CD8-positive, alpha-beta T cell (primary cell): ENCODE measurements at regions of chr3 and their contacts with region 1.

Region 1: DNA sequence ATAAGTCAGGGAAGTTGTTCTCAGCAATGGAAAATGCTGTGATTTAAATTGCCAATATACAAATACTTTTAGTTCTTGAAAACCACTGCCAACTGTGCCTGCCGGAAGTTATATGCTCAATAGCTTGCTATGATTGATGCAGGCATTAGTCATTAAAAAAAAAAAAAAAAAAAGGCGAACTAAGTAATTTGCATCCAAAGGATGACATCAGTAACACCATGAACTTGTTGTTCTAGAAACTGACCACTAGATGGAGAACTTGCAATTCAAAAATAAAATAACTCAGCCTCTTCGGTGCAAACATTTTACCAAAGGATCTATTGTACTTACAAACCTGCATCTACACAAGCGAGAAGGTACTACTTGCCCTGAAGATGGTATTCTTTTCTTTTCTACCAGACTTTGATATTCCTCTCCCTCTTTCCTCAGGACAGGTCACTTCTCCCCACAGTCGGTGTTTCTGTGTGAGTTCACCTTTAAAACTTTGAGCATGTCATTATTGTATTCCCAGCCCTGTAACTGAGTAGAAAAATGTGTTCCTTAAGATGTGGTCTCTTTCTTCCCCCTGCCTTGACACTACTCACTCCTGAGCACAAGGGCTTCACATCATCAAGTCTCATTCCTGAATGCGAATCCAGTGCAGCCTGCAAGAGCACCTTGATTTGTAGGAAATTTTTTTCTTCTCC is 115.0 kb upstream of the VEPH1 start:
- DNase-seq: peak in 3 of 9 experiments; percentile 23 to 57 (median 48)
- ATAC-seq: peak; percentile 73
- H3K4me3 ChIP-seq: no peak overlapping the region
- H3K4me3 Mint-ChIP-seq: no peak overlapping the region
- H3K27ac ChIP-seq: no peak overlapping the region
- H3K27ac Mint-ChIP-seq: no peak overlapping the region
- H3K4me1 ChIP-seq: no peaks in the 10 kb centered on the region
- H3K4me1 Mint-ChIP-seq: peaks cover 5% of the 10 kb centered on the region
- H3K27me3 ChIP-seq: no peaks in the 10 kb centered on the region
- H3K27me3 Mint-ChIP-seq: peaks cover 5% of the 10 kb centered on the region
- CTCF ChIP-seq: peak; percentile 61

Region 2: DNA sequence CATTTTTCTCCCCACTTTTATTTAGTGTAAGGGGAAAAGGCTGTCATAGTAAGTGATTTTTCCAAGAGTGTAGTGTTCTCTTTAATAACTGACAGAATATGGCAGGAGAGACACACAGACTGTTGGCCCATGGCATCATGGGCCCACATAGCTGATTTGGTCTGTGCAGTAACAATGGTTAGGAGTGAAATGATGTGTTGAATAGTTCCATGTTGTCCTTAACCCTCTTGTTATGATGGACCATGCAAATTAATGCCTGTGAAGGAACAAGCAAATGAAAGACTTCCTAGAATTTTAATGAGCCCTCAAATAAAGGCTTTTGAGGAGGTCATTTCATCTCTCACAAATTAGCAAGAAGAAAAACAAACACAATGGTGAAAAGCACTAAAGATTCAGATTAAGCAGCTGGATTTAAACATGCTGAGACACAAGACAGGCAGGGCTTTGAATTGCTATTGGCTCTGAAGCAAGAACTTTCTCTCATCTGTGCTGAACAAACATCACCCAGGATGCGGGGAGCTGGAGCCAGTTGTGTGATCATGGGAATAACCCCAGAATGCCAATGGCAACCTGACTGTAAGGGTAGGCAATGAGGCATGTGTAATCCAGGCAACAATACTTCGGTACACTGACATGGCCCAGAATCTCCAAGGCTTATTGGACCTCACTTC is 21.7 kb after region 1 on chr3:
- CTCF ChIA-PET with region 1: no interaction called
- POLR2A ChIA-PET with region 1: no interaction called
- intact Hi-C with region 1: no loop called
- DNase-seq: no peak
- ATAC-seq: no peak
- H3K4me3 ChIP-seq: no peak overlapping the region
- H3K4me3 Mint-ChIP-seq: no peak overlapping the region
- H3K27ac ChIP-seq: no peak overlapping the region
- H3K27ac Mint-ChIP-seq: no peak overlapping the region
- H3K4me1 ChIP-seq: no peaks in the 10 kb centered on the region
- H3K4me1 Mint-ChIP-seq: no peaks in the 10 kb centered on the region
- H3K27me3 ChIP-seq: no peaks in the 10 kb centered on the region
- H3K27me3 Mint-ChIP-seq: peaks cover 8% of the 10 kb centered on the region
- CTCF ChIP-seq: no peak

Region 3: GRCh38 chr3:158313338-158313927 is 695.2 kb after region 1 on chr3:
- CTCF ChIA-PET with region 1: no interaction called
- POLR2A ChIA-PET with region 1: no interaction called
- intact Hi-C with region 1: loop called (anchors 5 kb)
- DNase-seq: peak in 2 of 9 experiments; percentile 15 to 25
- ATAC-seq: no peak
- H3K4me3 ChIP-seq: no peak overlapping the region
- H3K4me3 Mint-ChIP-seq: no peak overlapping the region
- H3K27ac ChIP-seq: no peak overlapping the region
- H3K27ac Mint-ChIP-seq: no peak overlapping the region
- H3K4me1 ChIP-seq: no peaks in the 10 kb centered on the region
- H3K4me1 Mint-ChIP-seq: no peaks in the 10 kb centered on the region
- H3K27me3 ChIP-seq: no peaks in the 10 kb centered on the region
- H3K27me3 Mint-ChIP-seq: no peaks in the 10 kb centered on the region
- CTCF ChIP-seq: no peak

Region 4: GRCh38 chr3:158434412-158435038 is 816.3 kb after region 1 on chr3:
- CTCF ChIA-PET with region 1: interaction called, 7 read pairs
- POLR2A ChIA-PET with region 1: no interaction called
- intact Hi-C with region 1: loop called (anchors 1 to 2 kb)
- DNase-seq: peak in 4 of 9 experiments; percentile 11 to 49 (median 28)
- ATAC-seq: no peak
- H3K4me3 ChIP-seq: no peak overlapping the region
- H3K4me3 Mint-ChIP-seq: no peak overlapping the region
- H3K27ac ChIP-seq: no peak overlapping the region
- H3K27ac Mint-ChIP-seq: no peak overlapping the region
- H3K4me1 ChIP-seq: no peaks in the 10 kb centered on the region
- H3K4me1 Mint-ChIP-seq: no peaks in the 10 kb centered on the region
- H3K27me3 ChIP-seq: no peaks in the 10 kb centered on the region
- H3K27me3 Mint-ChIP-seq: no peaks in the 10 kb centered on the region
- CTCF ChIP-seq: peak; percentile 59

Region 5: GRCh38 chr3:158532099-158532734 is 914.0 kb after region 1 on chr3:
- CTCF ChIA-PET with region 1: no interaction called
- POLR2A ChIA-PET with region 1: no interaction called
- intact Hi-C with region 1: loop called in 1 of 2 experiments (anchors 5 kb)
- DNase-seq: peak in 2 of 9 experiments; percentile 23 to 37
- ATAC-seq: no peak
- H3K4me3 ChIP-seq: no peak overlapping the region
- H3K4me3 Mint-ChIP-seq: no peak overlapping the region
- H3K27ac ChIP-seq: no peak overlapping the region
- H3K27ac Mint-ChIP-seq: no peak overlapping the region
- H3K4me1 ChIP-seq: no peaks in the 10 kb centered on the region
- H3K4me1 Mint-ChIP-seq: no peaks in the 10 kb centered on the region
- H3K27me3 ChIP-seq: no peaks in the 10 kb centered on the region
- H3K27me3 Mint-ChIP-seq: no peaks in the 10 kb centered on the region
- CTCF ChIP-seq: peak; percentile 44